Lower leg skin (tissue), 4 donors: ENCODE measurements at regions of chr1 and their contacts with region 1.

Region 1: GRCh38 chr1:109112652-109113285 is 1.1 kb upstream of the ELAPOR1 start:
- DNase-seq: peak; percentile 91 to 98
- H3K4me3 ChIP-seq: no peak overlapping the region
- CTCF ChIP-seq: peak in 1 of 3 donors; percentile 66
- POLR2A ChIP-seq: no peak

Region 2: GRCh38 chr1:108758796-108759195 is 354.0 kb before region 1 on chr1:
- intact Hi-C with region 1: loop called (anchors 5 kb)
- DNase-seq: no peak
- H3K4me3 ChIP-seq: no peak overlapping the region
- CTCF ChIP-seq: no peak
- POLR2A ChIP-seq: no peak